Stomach (tissue), 19 donors: ENCODE measurements at regions of chr22 and their contacts with region 1.

Region 1: GRCh38 chr22:20965104-20965887 is 1.8 kb upstream of the AIFM3 start:
- DNase-seq: no peak
- H3K4me3 ChIP-seq: peak overlapping the region; percentile 42 to 51 (median 49)
- H3K27ac ChIP-seq: no peak overlapping the region
- H3K4me1 ChIP-seq: peaks cover 9 to 35% (median 14%) of the 10 kb centered on the region in 4 donors
- H3K27me3 ChIP-seq: peaks cover 0 to 33% (median 13%) of the 10 kb centered on the region in 3 donors
- CTCF ChIP-seq: no peak
- EP300 ChIP-seq: no peak
- POLR2A ChIP-seq: no peak

Region 2: GRCh38 chr22:20777420-20778177 is 187.7 kb before region 1 on chr22:
- intact Hi-C with region 1: no loop called
- DNase-seq: peak in 1 of 2 donors; percentile 86
- H3K4me3 ChIP-seq: no peak overlapping the region
- H3K27ac ChIP-seq: peak overlapping the region in 3 of 5 donors; percentile 14 to 52 (median 50)
- H3K4me1 ChIP-seq: peaks cover 5 to 21% (median 9%) of the 10 kb centered on the region in 4 donors
- H3K27me3 ChIP-seq: no peaks in the 10 kb centered on the region
- CTCF ChIP-seq: no peak
- EP300 ChIP-seq: no peak
- POLR2A ChIP-seq: no peak

Region 3: DNA sequence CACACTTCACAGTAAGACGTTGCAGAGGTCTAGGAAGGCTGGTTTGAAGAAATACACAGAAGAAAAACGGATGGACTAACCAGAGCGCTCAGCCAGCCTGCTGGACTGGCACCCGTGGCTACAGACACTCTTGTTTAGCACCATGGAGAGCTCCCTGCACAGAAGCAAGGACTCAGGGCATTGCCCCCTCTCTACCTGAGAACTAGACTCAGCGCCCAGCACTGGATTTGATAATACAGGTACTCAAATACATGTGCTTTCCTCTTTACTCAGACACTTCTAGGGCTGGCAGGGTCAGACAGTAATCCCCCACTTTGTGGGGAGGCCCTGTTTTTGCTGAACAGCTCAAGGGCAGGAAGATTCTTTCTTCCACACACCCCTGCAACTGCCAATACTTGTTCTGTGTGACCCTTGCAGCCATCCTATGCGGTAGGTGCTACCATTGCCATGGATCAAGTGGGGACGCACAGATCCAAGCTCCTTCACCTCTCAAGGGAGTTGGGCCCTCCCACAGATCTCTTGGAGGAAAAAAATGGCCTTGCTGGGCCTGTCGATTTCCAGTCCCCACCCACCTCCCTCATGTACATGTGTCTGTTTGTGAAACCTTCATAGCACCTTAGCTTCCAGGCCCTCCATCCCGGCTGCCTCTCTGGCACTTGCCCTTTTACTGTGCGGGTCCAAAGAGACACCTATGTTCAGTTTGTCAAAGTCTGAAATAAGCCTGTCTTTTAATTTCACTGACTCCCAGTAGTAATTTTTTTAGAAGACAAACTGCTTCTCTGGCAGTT is 44.5 kb after region 1 on chr22:
- intact Hi-C with region 1: no loop called
- DNase-seq: peak; percentile 48 to 90
- H3K4me3 ChIP-seq: no peak overlapping the region
- H3K27ac ChIP-seq: no peak overlapping the region
- H3K4me1 ChIP-seq: peaks cover 5 to 16% (median 15%) of the 10 kb centered on the region in 4 donors
- H3K27me3 ChIP-seq: no peaks in the 10 kb centered on the region
- CTCF ChIP-seq: no peak
- EP300 ChIP-seq: no peak
- POLR2A ChIP-seq: no peak

Region 4: DNA sequence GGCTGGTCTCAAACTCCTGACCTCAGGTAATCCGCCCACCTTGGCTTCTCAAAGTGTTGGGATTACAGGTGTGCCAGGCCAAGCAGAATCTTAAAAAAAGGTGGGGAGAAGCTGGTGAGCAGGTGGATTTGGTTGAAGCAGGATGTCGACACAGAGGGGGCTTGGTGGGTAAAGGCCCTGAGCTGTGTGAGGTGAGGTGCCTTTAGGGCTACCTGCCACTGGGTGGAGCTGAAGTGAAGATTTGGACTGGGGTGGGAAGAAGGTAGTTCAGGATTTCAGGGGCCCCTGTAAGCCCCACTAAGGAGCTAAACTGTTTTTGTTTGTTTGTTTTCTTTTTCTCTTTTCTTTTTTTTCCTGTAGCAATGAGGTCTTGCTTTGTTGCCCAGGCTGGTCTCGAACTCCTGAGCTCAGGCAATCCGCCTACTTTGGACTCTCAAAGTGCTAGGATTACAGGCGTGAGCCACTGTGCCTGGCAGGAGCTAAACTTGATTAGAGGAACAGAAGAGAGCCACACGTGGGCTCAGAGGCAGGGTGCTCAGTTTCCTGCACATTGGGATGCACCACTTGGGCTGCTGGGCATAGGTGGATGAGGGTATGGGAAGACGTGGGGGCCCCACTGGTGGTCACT is 55.6 kb after region 1 on chr22:
- intact Hi-C with region 1: loop called (anchors 10 kb)
- DNase-seq: no peak
- H3K4me3 ChIP-seq: no peak overlapping the region
- H3K27ac ChIP-seq: no peak overlapping the region
- H3K4me1 ChIP-seq: peaks cover 0 to 2% (median 2%) of the 10 kb centered on the region in 4 donors
- H3K27me3 ChIP-seq: no peaks in the 10 kb centered on the region
- CTCF ChIP-seq: no peak
- EP300 ChIP-seq: no peak
- POLR2A ChIP-seq: no peak